GM18951 (cell line): ENCODE measurements at regions of chr3 and their contacts with region 1.

Region 1: DNA sequence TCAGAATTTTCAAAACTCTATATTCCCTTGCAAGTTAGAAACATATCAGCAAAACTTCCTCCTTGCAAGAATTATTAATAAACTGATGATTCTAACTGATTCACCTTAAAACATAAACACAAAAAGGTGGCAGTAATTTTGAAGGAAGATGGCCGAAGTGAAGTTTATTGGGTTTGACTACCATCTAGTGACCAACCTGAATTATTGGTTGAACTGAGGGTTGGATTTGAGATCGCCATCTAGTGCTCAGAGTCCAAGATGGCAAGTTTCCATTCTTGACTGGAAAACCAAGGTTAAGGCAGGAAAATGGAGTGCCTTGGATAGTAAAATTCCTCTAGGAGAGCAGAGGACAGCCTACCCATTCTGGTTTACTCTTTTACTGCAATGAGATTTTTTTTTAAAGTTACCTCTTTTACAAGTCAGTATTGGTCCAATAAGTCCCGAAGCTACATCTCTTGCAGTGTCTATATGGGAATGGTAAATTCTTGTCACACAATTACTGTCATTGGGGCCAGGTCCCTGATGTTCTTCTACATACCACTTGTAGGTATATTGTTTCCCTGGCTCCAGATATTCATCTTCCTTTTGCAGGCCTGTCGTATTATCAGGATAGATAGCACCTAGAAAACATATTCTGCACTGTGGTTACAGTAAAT is 51.6 kb upstream of the CP start:
- POLR2A ChIP-seq: no peak

Region 2: DNA sequence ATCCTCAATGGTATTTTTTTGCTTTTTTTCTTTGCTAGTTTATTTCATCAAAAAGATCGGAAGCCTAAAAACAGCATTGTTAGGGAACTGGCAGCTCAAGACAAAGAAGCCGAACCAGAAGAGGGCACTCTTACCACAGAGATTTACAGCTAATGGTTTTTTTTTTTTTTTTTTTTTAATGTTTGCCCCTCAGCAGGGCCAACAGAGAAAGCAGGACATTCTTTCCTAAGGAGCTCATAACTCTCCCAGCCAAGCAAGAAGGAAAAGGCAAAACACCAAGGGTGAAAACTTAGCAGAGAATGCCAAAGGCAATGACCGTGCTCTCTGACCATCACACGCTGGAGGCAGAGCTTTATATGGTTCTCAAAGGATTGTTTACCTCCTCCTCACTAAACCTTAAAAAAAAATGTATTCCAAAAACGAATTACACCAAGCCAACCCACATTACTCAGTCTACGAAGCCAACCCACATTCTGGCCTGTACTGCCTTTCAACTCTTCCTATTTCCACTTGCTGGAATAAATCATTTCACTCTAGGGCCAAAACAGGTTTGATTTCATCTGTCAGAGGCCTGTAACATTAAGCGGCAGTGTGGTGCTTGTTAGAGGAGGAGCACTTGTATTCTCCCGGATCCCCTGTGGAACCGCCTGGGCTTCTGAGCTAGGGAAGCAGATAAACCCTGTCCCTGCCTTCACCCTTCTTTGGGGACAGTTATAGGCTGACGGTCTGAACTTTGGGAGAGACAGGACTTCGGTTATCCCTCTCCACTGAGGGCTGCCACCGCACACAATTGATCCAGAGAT is 317.5 kb before region 1 on chr3:
- in situ Hi-C with region 1: loop called (anchors 5 kb)
- POLR2A ChIP-seq: no peak

Region 3: GRCh38 chr3:149129326-149130205 is 143.7 kb before region 1 on chr3 and contains the start of gene HPS3:
- in situ Hi-C with region 1: loop called (anchors 5 kb)
- POLR2A ChIP-seq: peak; percentile 93